Gastrocnemius medialis (tissue), 4 donors: ENCODE measurements at regions of chr4 and their contacts with region 1.

Region 1: GRCh38 chr4:44132526-44132925 is 316.1 kb downstream of the KCTD8 start:
- DNase-seq: no peak
- ATAC-seq: no peak
- H3K4me3 ChIP-seq: no peak overlapping the region
- H3K27ac ChIP-seq: no peak overlapping the region
- H3K4me1 ChIP-seq: no peaks in the 10 kb centered on the region
- H3K27me3 ChIP-seq: no peaks in the 10 kb centered on the region
- CTCF ChIP-seq: no peak
- POLR2A ChIP-seq: no peak

Region 2: GRCh38 chr4:43918377-43918776 is 214.1 kb before region 1 on chr4:
- in situ Hi-C with region 1: no loop called
- intact Hi-C with region 1: loop called (anchors 5 kb)
- DNase-seq: no peak
- ATAC-seq: no peak
- H3K4me3 ChIP-seq: no peak overlapping the region
- H3K27ac ChIP-seq: no peak overlapping the region
- H3K4me1 ChIP-seq: no peaks in the 10 kb centered on the region
- H3K27me3 ChIP-seq: no peaks in the 10 kb centered on the region
- CTCF ChIP-seq: no peak
- POLR2A ChIP-seq: no peak